Activated CD8-positive, alpha-beta memory T cell treated with anti-CD3 and anti-CD28 coated beads, Interleukin-2, amount 10 ng/mL, durations not matched to agents 7 days and 5 days (primary cell): ENCODE measurements at regions of chr12 and their contacts with region 1.

Region 1: DNA sequence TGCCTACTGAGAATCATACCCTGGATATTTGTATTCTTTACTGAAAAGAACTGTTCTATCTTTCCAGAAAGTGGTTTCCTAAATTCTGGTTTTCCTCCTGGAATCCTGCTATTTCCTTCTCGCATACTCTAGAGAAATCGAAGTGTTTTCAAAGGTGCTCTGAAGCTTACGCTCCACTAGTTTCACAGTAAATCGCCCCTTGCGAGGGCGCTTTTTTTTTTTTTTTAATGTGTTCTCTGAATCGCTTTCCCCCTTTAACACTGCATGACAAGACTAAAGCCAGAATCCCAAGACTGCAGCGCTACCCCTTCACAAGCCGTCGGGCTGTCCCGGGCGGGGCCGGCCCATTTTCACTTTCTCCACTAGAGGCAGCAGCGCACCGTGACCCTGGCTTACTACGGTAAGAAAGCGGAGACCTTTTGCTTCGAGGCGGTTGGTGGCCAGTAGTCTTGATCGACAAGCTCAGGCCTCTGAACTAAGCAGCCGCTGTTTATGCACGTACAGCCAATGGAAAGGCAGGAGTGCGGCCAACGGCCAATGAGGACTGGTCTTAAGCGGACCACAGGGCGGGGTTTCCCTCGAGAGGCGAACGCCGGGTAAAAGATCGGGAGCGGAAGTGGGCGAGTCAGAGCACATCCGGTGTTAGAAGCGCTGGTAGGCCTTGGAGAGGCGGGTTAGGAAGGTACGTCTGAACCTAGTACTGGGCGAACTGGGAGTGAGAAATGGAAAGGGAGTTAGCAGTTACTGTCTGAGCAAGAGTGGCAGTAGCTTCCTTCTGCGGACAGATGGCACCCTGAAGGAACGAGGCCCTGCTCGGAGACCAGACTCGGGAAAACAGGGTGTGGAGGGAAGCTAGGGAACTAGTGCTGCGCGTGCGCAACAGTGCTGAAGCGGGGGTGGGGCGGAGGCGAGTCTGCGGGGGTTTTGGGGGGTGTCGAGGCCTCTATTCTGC is at the start of gene TMBIM6:
- DNase-seq: peak; percentile 100
- ATAC-seq: peak; percentile 91
- H3K4me3 Mint-ChIP-seq: peak within 1 kb of the TSS; percentile 98
- H3K27ac Mint-ChIP-seq: peak within 1 kb of the TSS; percentile 100
- H3K4me1 Mint-ChIP-seq: peaks cover 44% of the 10 kb centered on the region
- H3K27me3 Mint-ChIP-seq: no peaks in the 10 kb centered on the region
- total RNA-seq, gene TMBIM6: 396 to 524 TPM

Region 2: GRCh38 chr12:49623142-49623904 is 117.9 kb before region 1 on chr12 and contains the start of gene PRPF40B:
- CTCF ChIA-PET with region 1: interaction called, 10 read pairs
- DNase-seq: peak; percentile 88
- ATAC-seq: peak; percentile 89
- H3K4me3 Mint-ChIP-seq: peak within 1 kb of the TSS; percentile 76
- H3K27ac Mint-ChIP-seq: peak within 1 kb of the TSS; percentile 85
- H3K4me1 Mint-ChIP-seq: peaks cover 22% of the 10 kb centered on the region
- H3K27me3 Mint-ChIP-seq: peaks cover 37% of the 10 kb centered on the region
- total RNA-seq, gene PRPF40B: 7.8 to 15.2 TPM

Region 3: DNA sequence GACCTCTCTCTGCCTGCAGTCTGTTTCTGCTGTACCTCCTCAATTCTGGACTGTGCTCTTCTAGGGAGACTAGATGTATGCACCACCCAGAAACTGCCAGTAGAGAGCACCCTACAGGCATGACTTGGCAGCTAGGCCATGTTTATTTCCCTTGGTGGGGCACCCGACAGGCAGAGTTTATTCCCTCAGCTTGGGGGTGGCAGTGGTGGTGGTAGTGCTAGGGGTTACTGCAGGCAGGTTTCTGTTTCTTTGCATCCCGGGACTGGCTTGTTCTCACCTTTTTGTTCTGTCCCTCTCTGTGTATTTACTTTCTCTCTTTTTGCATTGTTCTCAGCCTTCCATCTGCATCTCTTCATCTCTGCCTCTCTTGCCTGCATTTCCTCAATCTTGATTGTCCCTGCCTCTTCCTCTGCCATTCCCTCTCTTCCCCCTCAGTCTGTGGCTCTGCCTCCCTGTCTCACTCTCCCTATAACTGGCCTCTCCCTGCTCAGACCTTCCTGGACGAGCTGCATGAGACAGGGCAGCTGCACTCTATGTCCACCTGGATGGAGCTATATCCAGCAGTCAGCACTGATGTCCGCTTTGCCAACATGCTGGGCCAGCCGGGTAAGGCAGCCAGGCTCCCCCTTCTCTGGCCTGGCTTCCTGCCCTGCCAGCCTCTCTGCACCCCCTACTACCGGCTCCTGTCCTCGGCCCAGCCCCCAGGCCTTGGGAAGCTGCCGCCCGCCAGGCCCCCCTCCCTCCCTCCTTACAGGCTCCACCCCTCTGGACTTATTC is 104.0 kb before region 1 on chr12:
- CTCF ChIA-PET with region 1: interaction called, 17 read pairs
- DNase-seq: peak; percentile 79
- ATAC-seq: peak; percentile 91
- H3K4me3 Mint-ChIP-seq: no peak overlapping the region
- H3K27ac Mint-ChIP-seq: no peak overlapping the region
- H3K4me1 Mint-ChIP-seq: peaks cover 19% of the 10 kb centered on the region
- H3K27me3 Mint-ChIP-seq: no peaks in the 10 kb centered on the region

Region 4: GRCh38 chr12:49662998-49663843 is 78.0 kb before region 1 on chr12:
- CTCF ChIA-PET with region 1: interaction called, 18 read pairs
- DNase-seq: peak; percentile 90
- ATAC-seq: peak; percentile 98
- H3K4me3 Mint-ChIP-seq: peak overlapping the region; percentile 48
- H3K27ac Mint-ChIP-seq: peak overlapping the region; percentile 94
- H3K4me1 Mint-ChIP-seq: peaks cover 62% of the 10 kb centered on the region
- H3K27me3 Mint-ChIP-seq: no peaks in the 10 kb centered on the region

Region 5: GRCh38 chr12:49763006-49763591 is 21.9 kb after region 1 on chr12:
- CTCF ChIA-PET with region 1: interaction called, 81 read pairs
- DNase-seq: peak; percentile 88
- ATAC-seq: peak; percentile 74
- H3K4me3 Mint-ChIP-seq: peak overlapping the region; percentile 17
- H3K27ac Mint-ChIP-seq: peak overlapping the region; percentile 85
- H3K4me1 Mint-ChIP-seq: peaks cover 52% of the 10 kb centered on the region
- H3K27me3 Mint-ChIP-seq: no peaks in the 10 kb centered on the region

Region 6: GRCh38 chr12:49842519-49843352 is 101.5 kb after region 1 on chr12 and contains the start of gene BCDIN3D:
- CTCF ChIA-PET with region 1: interaction called, 17 read pairs
- DNase-seq: peak; percentile 94
- ATAC-seq: peak; percentile 96
- H3K4me3 Mint-ChIP-seq: peak within 1 kb of the TSS; percentile 91
- H3K27ac Mint-ChIP-seq: peak within 1 kb of the TSS; percentile 90
- H3K4me1 Mint-ChIP-seq: peaks cover 37% of the 10 kb centered on the region
- H3K27me3 Mint-ChIP-seq: no peaks in the 10 kb centered on the region
- total RNA-seq, gene BCDIN3D: 8.2 to 8.3 TPM